ENCODE measurements at regions of chr5 and their contacts with region 1.

Region 1: DNA sequence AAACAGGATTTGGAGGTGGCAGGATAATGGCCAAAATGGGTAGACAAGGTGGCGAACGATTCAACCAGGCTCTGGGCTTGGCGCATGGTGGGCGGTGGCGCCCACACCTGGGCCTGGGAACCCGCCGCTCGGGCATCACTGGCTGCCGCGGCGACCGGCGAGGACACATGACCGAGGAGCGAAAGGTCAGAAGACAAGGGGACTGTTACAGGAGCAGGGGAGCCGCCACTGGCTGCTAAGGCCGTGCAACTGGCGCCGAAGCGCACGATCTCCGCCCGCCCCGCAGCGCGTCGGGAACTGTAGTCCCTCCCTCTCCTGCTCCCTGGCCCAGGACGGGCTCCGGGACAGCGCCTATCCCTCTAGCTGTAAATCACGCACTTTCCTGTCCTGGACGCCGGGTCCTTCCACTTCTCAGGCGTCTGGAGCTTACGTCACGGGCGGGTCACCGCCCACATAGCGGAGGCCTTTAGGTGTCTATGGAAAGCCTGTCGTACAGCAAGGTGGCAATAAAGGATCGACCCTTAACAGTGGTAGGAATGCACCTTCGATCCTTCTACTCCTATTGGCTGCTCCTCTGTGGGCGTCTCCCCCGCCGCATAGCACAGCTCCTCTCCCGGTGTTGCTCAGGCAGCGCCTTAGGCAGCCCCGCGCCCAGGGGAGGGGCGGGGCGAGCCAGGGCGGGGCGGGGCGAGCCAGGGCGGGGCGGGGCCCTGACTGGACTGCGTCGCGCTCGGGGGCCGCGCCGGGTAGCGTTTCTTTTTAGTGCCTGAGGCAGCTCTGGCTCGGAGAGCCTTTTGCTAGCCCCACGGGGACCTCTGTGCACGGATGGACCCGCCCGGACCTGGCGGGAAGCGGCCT is at the start of gene ICE1:
- DNase-seq: peak; percentile 97 to 100
- H3K4me3 ChIP-seq: peak within 1 kb of the TSS; percentile 86
- H3K27ac ChIP-seq: peak within 1 kb of the TSS; percentile 89
- H3K4me1 ChIP-seq: peaks cover 32% of the 10 kb centered on the region
- H3K27me3 ChIP-seq: no peaks in the 10 kb centered on the region
- CTCF ChIP-seq: 0 out of 2 replicates have a peak, but pooled peaks have one; percentile 22
- total RNA-seq, gene ICE1: 59.1 and 68.4 TPM in 2 replicates

Region 2: DNA sequence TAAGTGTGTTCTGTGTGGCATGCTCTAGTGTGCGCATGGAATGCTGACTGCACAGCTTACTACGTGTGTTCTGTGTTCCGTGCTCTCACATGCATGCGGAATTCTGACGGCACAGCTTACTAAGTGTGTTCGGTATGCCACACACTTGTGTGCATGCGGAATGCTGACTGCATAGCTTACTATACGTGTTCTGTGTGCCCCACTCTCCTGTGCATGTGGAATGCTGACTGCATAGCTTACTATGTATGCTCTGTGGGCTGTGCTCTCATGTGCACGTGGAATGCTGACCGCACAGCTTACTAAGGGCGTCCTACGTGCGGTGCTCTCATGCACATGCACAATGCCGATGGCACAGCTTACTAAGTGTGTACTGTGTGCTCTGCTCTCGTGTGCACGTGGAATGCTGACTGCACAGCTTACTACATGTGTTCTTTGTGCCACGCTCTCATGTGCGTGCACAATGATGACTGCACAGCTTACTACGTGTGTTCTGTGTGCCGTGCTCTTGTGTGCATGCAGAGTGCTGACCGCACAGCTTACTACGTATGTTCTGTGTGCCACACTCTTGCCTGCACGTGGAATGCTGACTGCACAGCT is 1277.7 kb before region 1 on chr5:
- CTCF ChIA-PET with region 1: no interaction called
- POLR2A ChIA-PET with region 1: no interaction called
- intact Hi-C with region 1: no loop called
- DNase-seq: no peak
- H3K4me3 ChIP-seq: no peak overlapping the region
- H3K27ac ChIP-seq: no peak overlapping the region
- H3K4me1 ChIP-seq: no peaks in the 10 kb centered on the region
- H3K27me3 ChIP-seq: peaks cover 49% of the 10 kb centered on the region
- CTCF ChIP-seq: no peak

Region 3: GRCh38 chr5:4941957-4942830 is 480.0 kb before region 1 on chr5:
- CTCF ChIA-PET with region 1: no interaction called
- POLR2A ChIA-PET with region 1: no interaction called
- intact Hi-C with region 1: loop called (anchors 10 kb)
- DNase-seq: peak in 1 of 2 experiments; percentile 51
- H3K4me3 ChIP-seq: no peak overlapping the region
- H3K27ac ChIP-seq: no peak overlapping the region
- H3K4me1 ChIP-seq: no peaks in the 10 kb centered on the region
- H3K27me3 ChIP-seq: peaks cover 82% of the 10 kb centered on the region
- CTCF ChIP-seq: peak; percentile 97

Region 4: GRCh38 chr5:5141625-5142532 is 280.3 kb before region 1 on chr5:
- CTCF ChIA-PET with region 1: interaction called, 5 read pairs
- POLR2A ChIA-PET with region 1: interaction called, 6 read pairs
- intact Hi-C with region 1: loop called (anchors 1 kb)
- DNase-seq: peak; percentile 60 to 65
- H3K4me3 ChIP-seq: no peak overlapping the region
- H3K27ac ChIP-seq: no peak overlapping the region
- H3K4me1 ChIP-seq: peaks cover 20% of the 10 kb centered on the region
- H3K27me3 ChIP-seq: no peaks in the 10 kb centered on the region
- CTCF ChIP-seq: peak; percentile 97

Region 5: GRCh38 chr5:5398046-5398445 is 24.1 kb before region 1 on chr5:
- CTCF ChIA-PET with region 1: interaction called, 4 read pairs
- POLR2A ChIA-PET with region 1: interaction called, 7 read pairs
- intact Hi-C with region 1: loop called (anchors 1 kb)
- DNase-seq: no peak
- H3K4me3 ChIP-seq: no peak overlapping the region
- H3K27ac ChIP-seq: no peak overlapping the region
- H3K4me1 ChIP-seq: no peaks in the 10 kb centered on the region
- H3K27me3 ChIP-seq: no peaks in the 10 kb centered on the region
- CTCF ChIP-seq: no peak

Region 6: DNA sequence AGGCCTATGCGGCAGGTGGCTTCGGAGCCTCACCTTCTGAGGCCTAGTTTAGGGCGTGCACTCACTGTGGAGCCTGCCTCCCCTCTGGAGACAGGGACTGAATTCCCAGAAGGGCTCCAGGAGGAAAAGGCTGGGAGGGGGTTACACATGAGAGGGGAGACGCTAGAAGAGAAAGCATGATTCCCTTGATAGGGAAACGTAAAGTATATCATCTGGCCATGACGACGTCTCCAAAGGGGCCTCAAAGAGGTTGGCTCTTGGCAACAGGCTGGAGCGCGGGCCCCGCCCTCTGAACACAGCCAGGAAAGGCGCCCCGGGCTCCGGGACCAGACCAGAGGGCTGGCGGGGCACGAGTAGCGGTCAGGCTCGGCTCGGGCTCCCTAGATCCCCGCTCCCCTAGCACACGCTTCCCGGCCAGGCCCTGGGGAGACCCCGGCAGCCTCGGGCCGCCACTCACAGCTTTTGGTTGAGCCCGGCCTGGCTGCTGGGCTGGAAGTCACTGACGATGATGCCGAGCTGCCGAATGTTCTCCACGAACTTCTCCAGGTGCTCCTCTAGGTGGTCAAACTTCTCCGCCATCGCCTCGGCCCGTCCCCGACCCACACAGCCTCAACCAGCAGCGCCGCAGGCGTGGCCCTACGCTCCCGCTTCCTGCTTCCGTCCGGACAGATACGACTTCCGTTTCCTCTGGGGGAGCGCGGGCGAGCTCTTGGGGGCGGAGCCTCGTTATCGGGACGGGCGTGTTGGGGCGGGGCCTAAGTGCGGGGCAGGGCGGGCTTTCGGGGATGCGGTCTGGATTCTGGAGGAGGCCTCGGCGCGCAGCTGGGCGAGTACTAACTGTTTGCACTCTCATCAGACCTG is 955.9 kb after region 1 on chr5 and contains the start of gene MED10:
- CTCF ChIA-PET with region 1: no interaction called
- POLR2A ChIA-PET with region 1: no interaction called
- intact Hi-C with region 1: loop called (anchors 5 kb)
- DNase-seq: peak; percentile 87 to 98
- H3K4me3 ChIP-seq: peak within 1 kb of the TSS; percentile 93
- H3K27ac ChIP-seq: peak within 1 kb of the TSS; percentile 59
- H3K4me1 ChIP-seq: peaks cover 18% of the 10 kb centered on the region
- H3K27me3 ChIP-seq: no peaks in the 10 kb centered on the region
- CTCF ChIP-seq: no peak
- total RNA-seq, gene MED10: 81.8 and 82.0 TPM in 2 replicates